ENCODE measurements at regions of chr1 and their contacts with region 1.

Region 1: GRCh38 chr1:204363335-204364124 is 3.8 kb upstream of the PLEKHA6 start:
- DNase-seq: peak; percentile 29
- H3K4me3 ChIP-seq: peak overlapping the region; percentile 52
- H3K27ac ChIP-seq: peak overlapping the region; percentile 47
- H3K27me3 ChIP-seq: peaks cover 18% of the 10 kb centered on the region
- CTCF ChIP-seq: peak; percentile 99

Region 2: GRCh38 chr1:204207136-204207616 is 156.4 kb before region 1 on chr1:
- CTCF ChIA-PET with region 1: interaction called, 48 read pairs
- POLR2A ChIA-PET with region 1: no interaction called
- DNase-seq: no peak
- H3K4me3 ChIP-seq: no peak overlapping the region
- H3K27ac ChIP-seq: no peak overlapping the region
- H3K27me3 ChIP-seq: no peaks in the 10 kb centered on the region
- CTCF ChIP-seq: peak; percentile 92

Region 3: GRCh38 chr1:204232526-204232925 is 131.0 kb before region 1 on chr1:
- CTCF ChIA-PET with region 1: interaction called, 21 read pairs
- POLR2A ChIA-PET with region 1: no interaction called
- DNase-seq: no peak
- H3K4me3 ChIP-seq: no peak overlapping the region
- H3K27ac ChIP-seq: no peak overlapping the region
- H3K27me3 ChIP-seq: no peaks in the 10 kb centered on the region
- CTCF ChIP-seq: no peak

Region 4: GRCh38 chr1:204307334-204307883 is 56.1 kb before region 1 on chr1:
- CTCF ChIA-PET with region 1: interaction called, 15 read pairs
- POLR2A ChIA-PET with region 1: no interaction called
- DNase-seq: no peak
- H3K4me3 ChIP-seq: peak overlapping the region; percentile 56
- H3K27ac ChIP-seq: peak overlapping the region; percentile 58
- H3K27me3 ChIP-seq: no peaks in the 10 kb centered on the region
- CTCF ChIP-seq: peak; percentile 44

Region 5: DNA sequence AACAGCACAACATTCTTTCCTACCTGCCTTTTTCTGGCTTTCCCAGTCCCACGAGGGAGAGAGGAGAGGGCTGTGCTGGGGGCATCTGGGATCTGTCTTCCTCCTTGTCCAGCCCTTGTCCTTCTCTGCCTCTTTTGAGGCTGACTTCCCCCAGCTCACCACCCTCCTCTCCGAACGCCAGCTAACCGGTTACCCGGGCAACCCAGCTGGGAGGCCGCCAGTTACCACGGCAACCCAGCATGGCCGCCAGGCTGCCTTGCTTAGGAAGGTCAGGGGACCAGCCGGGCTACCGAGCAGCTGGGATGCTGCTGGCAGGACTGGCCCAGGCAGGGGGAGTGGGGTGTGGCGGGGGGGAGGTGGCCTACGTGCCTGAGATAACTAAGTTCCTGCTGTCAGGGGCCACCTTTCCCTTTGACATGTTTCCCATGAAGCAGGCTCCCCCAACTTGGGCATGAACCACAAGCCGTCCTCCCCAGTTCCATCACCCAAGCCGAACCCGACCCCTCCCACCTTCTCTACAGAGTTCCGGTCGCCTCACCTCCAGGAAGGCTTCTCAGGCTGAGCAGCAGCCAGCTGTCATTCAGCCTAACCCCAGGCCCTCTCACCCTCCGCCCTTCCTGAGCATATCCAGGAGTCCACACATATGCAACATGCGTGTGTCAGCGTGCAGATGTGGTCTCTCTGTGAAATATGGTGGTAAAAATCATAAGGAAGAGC is 12.5 kb before region 1 on chr1:
- CTCF ChIA-PET with region 1: interaction called, 10 read pairs
- POLR2A ChIA-PET with region 1: interaction called, 5 read pairs
- DNase-seq: peak; percentile 59
- H3K4me3 ChIP-seq: peak overlapping the region; percentile 59
- H3K27ac ChIP-seq: no peak overlapping the region
- H3K27me3 ChIP-seq: no peaks in the 10 kb centered on the region
- CTCF ChIP-seq: no peak